HCT116 (cell line): ENCODE measurements at regions of chr14 and their contacts with region 1.

Region 1: DNA sequence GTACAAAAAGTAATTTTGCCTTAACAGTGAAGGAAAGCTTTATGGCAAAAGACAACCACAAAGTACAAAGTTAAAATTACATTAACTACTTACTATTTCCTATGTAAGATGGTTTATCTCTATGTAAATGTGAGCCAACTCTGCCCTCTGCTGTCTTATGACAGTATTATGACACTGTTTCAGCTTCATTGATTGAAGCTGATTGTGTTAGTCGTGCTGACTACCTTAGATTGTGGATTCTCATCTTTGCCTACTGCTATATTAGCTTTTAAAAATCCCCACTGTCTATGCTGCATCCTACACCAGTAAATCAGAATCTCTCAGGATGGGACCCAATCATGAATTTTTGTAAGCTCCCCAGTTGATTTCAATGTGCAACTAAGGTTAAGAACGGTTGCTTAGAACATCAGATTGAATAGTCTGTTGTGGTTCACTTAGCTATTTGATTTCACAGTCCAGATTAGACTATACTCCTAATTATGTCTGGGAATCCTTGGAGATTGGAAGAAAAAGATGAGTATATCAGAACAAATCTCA is 12.2 kb upstream of the SPTB start:
- DNase-seq: peak; percentile 59
- ATAC-seq: peak; percentile 98
- H3K4me3 ChIP-seq: no peak overlapping the region
- H3K27ac ChIP-seq: no peak overlapping the region
- H3K4me1 ChIP-seq: no peaks in the 10 kb centered on the region
- H3K27me3 ChIP-seq: no peaks in the 10 kb centered on the region
- CTCF ChIP-seq: peak; percentile 35 to 85 (median 65)
- POLR2A ChIP-seq: no peak
- RAD21 ChIP-seq: peak; percentile 88

Region 2: GRCh38 chr14:64338616-64339316 is 553.1 kb before region 1 on chr14:
- CTCF ChIA-PET with region 1: interaction called, 14 read pairs
- POLR2A ChIA-PET with region 1: no interaction called
- RAD21 ChIA-PET with region 1: no interaction called
- intact Hi-C with region 1: loop called (anchors 5 kb)
- DNase-seq: peak; percentile 97
- ATAC-seq: peak; percentile 87
- H3K4me3 ChIP-seq: peak overlapping the region; percentile 80 to 81
- H3K27ac ChIP-seq: peak overlapping the region; percentile 93
- H3K4me1 ChIP-seq: peaks cover 11 to 19% of the 10 kb centered on the region in 2 experiments; a peak in 3 of 4 replicates
- H3K27me3 ChIP-seq: no peaks in the 10 kb centered on the region
- CTCF ChIP-seq: no peak
- POLR2A ChIP-seq: peak; percentile 61
- RAD21 ChIP-seq: no peak

Region 3: DNA sequence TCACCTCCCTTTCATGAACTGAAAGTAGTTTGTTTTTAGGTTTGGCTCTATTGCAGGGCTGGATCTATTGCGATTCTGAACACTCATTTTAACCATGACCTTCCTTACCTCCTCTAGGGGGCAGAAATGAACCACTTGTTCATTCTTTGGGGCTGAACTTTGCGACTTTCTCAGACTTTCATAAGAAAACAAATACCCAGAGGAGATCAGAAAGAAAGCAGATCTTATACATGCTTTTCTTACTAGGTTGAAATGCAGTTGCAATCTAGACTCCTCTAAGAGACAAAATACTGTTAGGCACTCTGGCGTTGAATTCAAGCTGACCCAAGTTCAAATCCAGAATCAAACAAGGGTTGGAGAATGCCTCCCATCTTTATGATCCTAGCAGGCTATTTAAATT is 220.3 kb before region 1 on chr14:
- CTCF ChIA-PET with region 1: interaction called, 5 read pairs
- POLR2A ChIA-PET with region 1: no interaction called
- RAD21 ChIA-PET with region 1: interaction called in 1 of 2 experiments, 3 read pairs
- intact Hi-C with region 1: loop called (anchors 5 kb)
- DNase-seq: peak; percentile 60
- ATAC-seq: peak; percentile 87
- H3K4me3 ChIP-seq: no peak overlapping the region
- H3K27ac ChIP-seq: no peak overlapping the region
- H3K4me1 ChIP-seq: peaks cover 0 to 7% of the 10 kb centered on the region in 2 experiments; a peak in 2 of 4 replicates
- H3K27me3 ChIP-seq: no peaks in the 10 kb centered on the region
- CTCF ChIP-seq: peak; percentile 68 to 91 (median 75)
- POLR2A ChIP-seq: no peak
- RAD21 ChIP-seq: peak; percentile 94

Region 4: DNA sequence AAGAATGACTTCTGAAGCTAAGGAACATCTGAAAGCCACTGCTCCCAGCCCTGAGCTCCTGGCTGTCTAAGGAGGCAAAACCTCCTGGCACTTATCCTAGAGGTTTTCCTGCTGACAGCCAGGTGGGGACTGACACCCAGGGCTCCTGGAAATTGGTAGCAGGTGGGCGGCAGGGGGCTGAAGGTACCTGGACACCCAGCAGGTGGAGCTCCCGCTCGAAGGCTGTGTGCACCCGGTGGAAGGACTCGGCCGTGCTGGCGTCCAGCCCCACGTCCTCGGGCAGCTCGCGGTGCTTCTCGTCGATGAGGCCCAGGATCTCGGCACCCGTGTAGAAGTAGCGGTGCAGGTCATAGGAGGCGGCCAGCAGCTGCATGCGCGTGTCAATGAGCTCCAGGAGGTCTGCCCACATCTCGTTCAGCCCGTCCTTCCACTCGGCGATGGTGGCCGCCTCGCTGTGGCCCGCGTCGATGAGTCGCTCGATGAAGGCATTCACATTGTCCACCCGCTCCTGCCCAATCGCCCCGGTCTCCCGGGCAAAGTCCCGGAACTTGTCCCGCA is 119.4 kb before region 1 on chr14:
- CTCF ChIA-PET with region 1: interaction called, 17 read pairs
- POLR2A ChIA-PET with region 1: no interaction called
- RAD21 ChIA-PET with region 1: no interaction called
- intact Hi-C with region 1: no loop called
- DNase-seq: no peak
- ATAC-seq: peak; percentile 60
- H3K4me3 ChIP-seq: no peak overlapping the region
- H3K27ac ChIP-seq: no peak overlapping the region
- H3K4me1 ChIP-seq: peaks cover 0 to 4% of the 10 kb centered on the region in 2 experiments; a peak in 1 of 4 replicates
- H3K27me3 ChIP-seq: no peaks in the 10 kb centered on the region
- CTCF ChIP-seq: peak in 2 of 3 experiments; percentile 31 to 35; a peak in 3 of 6 replicates
- POLR2A ChIP-seq: no peak
- RAD21 ChIP-seq: peak; percentile 21; the same call in 1 of the 2 replicates

Region 5: GRCh38 chr14:64788668-64789067 is 103.2 kb before region 1 on chr14:
- CTCF ChIA-PET with region 1: no interaction called
- POLR2A ChIA-PET with region 1: no interaction called
- RAD21 ChIA-PET with region 1: no interaction called
- intact Hi-C with region 1: no loop called
- DNase-seq: peak; percentile 37
- ATAC-seq: peak; percentile 79
- H3K4me3 ChIP-seq: no peak overlapping the region
- H3K27ac ChIP-seq: no peak overlapping the region
- H3K4me1 ChIP-seq: peaks cover 2 to 11% of the 10 kb centered on the region in 2 experiments; a peak in 2 of 4 replicates
- H3K27me3 ChIP-seq: no peaks in the 10 kb centered on the region
- CTCF ChIP-seq: no peak
- POLR2A ChIP-seq: no peak
- RAD21 ChIP-seq: no peak

Region 6: GRCh38 chr14:64823305-64823861 is 68.5 kb before region 1 on chr14:
- CTCF ChIA-PET with region 1: interaction called, 98 read pairs
- POLR2A ChIA-PET with region 1: interaction called, 5 read pairs
- RAD21 ChIA-PET with region 1: interaction called, 27 to 29 read pairs
- intact Hi-C with region 1: loop called (anchors 5 kb)
- DNase-seq: peak; percentile 38
- ATAC-seq: peak; percentile 100
- H3K4me3 ChIP-seq: peak overlapping the region in 1 of 2 experiments; percentile 20; a peak in 1 of 4 replicates
- H3K27ac ChIP-seq: no peak overlapping the region
- H3K4me1 ChIP-seq: peaks cover 0 to 15% of the 10 kb centered on the region in 2 experiments; a peak in 1 of 4 replicates
- H3K27me3 ChIP-seq: peaks cover 9% of the 10 kb centered on the region; the same call in 1 of the 2 replicates
- CTCF ChIP-seq: peak; percentile 75 to 82 (median 80)
- POLR2A ChIP-seq: no peak
- RAD21 ChIP-seq: peak; percentile 83

Region 7: GRCh38 chr14:64871344-64871743 is 20.6 kb before region 1 on chr14:
- CTCF ChIA-PET with region 1: no interaction called
- POLR2A ChIA-PET with region 1: no interaction called
- RAD21 ChIA-PET with region 1: no interaction called
- intact Hi-C with region 1: no loop called
- DNase-seq: no peak
- ATAC-seq: no peak
- H3K4me3 ChIP-seq: no peak overlapping the region
- H3K27ac ChIP-seq: no peak overlapping the region
- H3K4me1 ChIP-seq: no peaks in the 10 kb centered on the region
- H3K27me3 ChIP-seq: no peaks in the 10 kb centered on the region
- CTCF ChIP-seq: no peak
- POLR2A ChIP-seq: no peak
- RAD21 ChIP-seq: no peak

Region 8: GRCh38 chr14:64914237-64914971 is 22.5 kb after region 1 on chr14 and contains the start of gene CHURC1:
- CTCF ChIA-PET with region 1: interaction called, 23 read pairs
- POLR2A ChIA-PET with region 1: interaction called, 4 read pairs
- RAD21 ChIA-PET with region 1: interaction called in 1 of 2 experiments, 6 read pairs
- intact Hi-C with region 1: no loop called
- DNase-seq: peak; percentile 98
- ATAC-seq: peak; percentile 98
- H3K4me3 ChIP-seq: peak within 1 kb of the TSS; percentile 81 to 97
- H3K27ac ChIP-seq: peak within 1 kb of the TSS; percentile 79
- H3K4me1 ChIP-seq: peaks cover 8 to 16% of the 10 kb centered on the region in 2 experiments; a peak in 3 of 4 replicates
- H3K27me3 ChIP-seq: no peaks in the 10 kb centered on the region
- CTCF ChIP-seq: no peak
- POLR2A ChIP-seq: peak; percentile 71
- RAD21 ChIP-seq: no peak
- total RNA-seq, gene CHURC1: 47.5 TPM